Panc1 (cell line): ENCODE measurements at regions of chr3 and their contacts with region 1.

Region 1: DNA sequence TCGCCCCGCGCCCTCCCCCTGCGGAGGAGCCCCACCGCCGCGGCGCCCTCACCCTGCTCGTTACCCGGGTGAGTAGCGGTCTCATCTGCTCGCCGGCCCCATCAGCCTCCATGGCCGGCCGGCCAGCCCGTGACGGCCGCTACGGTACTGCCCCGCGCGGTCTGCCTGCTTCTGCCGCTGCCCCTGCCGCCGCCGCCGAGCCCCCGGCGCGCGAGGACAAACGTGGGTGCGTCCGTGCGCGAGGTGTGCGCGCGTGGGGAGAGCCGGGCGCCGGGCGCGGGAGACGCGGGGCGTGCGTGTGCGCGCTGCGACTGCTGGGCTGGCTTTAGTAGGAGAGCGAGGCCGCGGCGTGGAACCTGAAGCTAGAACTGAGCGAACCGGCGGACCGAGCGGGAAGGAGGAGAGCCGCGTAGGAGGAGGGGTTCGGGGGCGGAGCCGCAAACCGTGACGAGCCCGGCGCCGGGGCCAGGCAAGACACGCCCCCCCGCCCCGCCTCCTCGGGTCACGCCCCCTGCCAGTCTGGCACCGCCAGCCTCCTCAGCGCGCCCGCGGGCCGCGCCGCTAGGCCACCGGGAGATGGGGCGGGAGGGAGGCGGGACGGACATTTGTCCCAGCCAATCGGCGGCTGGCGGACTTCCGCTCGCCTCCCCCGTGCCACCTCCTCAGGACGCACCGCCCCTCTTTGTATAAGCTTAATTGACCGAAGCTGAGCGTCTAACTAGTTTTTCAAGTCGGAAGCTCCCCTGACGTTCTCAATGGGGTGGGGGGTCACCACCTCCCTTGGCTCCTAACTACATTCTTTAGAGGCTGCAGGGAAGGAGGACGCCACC is at the start of gene SLC4A7:
- DNase-seq: peak; percentile 57
- ATAC-seq: peak; percentile 92
- H3K4me3 ChIP-seq: peak within 1 kb of the TSS; percentile 78 to 86
- H3K27ac ChIP-seq: peak within 1 kb of the TSS; percentile 95
- H3K4me1 ChIP-seq: peaks cover 14% of the 10 kb centered on the region
- H3K27me3 ChIP-seq: no peaks in the 10 kb centered on the region
- CTCF ChIP-seq: no peak
- total RNA-seq, gene SLC4A7: 99.4 TPM

Region 2: GRCh38 chr3:27521179-27521871 is 37.1 kb after region 1 on chr3:
- CTCF ChIA-PET with region 1: interaction called, 7 read pairs
- POLR2A ChIA-PET with region 1: no interaction called
- in situ Hi-C with region 1: no loop called
- intact Hi-C with region 1: loop called (anchors 5 kb)
- DNase-seq: peak; percentile 86
- ATAC-seq: peak; percentile 69
- H3K4me3 ChIP-seq: no peak overlapping the region
- H3K27ac ChIP-seq: peak overlapping the region; percentile 99
- H3K4me1 ChIP-seq: peaks cover 36% of the 10 kb centered on the region
- H3K27me3 ChIP-seq: no peaks in the 10 kb centered on the region
- CTCF ChIP-seq: no peak

Region 3: GRCh38 chr3:27553886-27554540 is 69.8 kb after region 1 on chr3:
- CTCF ChIA-PET with region 1: no interaction called
- POLR2A ChIA-PET with region 1: no interaction called
- in situ Hi-C with region 1: no loop called
- intact Hi-C with region 1: no loop called
- DNase-seq: no peak
- ATAC-seq: no peak
- H3K4me3 ChIP-seq: no peak overlapping the region
- H3K27ac ChIP-seq: peak overlapping the region; percentile 57; the same call in 1 of the 2 replicates
- H3K4me1 ChIP-seq: no peaks in the 10 kb centered on the region
- H3K27me3 ChIP-seq: no peaks in the 10 kb centered on the region
- CTCF ChIP-seq: no peak

Region 4: DNA sequence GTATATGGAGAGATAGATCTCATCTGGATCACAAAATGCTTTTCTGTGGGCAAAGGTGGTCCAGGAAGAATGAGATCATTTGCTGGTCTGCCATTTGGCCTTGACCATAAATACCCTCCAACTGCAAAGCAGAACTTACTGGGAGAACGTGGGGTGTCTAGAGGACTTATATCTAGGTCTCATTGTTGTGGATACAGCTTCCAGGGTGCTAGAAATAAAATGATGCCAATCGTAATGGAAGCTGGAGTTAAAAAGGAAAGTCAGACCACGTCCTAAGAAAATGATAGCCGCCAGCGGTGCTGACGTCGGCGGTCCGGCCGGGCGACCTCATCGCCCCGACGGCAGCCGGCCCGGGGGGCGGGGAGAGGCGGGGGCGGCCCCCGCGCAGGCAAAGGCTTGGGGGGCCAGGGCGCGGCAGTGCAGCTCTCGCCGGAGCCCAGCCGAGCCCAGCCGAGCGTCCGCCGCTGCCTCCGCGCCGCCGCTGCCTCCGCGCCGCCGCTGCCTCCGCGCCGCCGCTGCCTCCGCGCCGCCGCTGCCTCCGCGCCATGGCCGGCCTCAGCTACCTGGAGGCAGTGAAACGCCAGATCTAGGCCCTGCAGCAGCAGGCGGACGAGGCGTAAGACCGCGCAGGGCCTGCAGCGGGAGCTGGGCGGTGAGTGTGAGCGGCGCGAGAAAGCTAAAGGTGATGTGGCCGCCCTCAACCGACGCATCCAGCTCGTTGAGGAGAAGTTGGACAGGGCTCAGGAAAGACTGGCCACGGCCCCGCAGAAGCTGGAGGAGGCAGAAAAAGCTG is 148.4 kb after region 1 on chr3:
- CTCF ChIA-PET with region 1: no interaction called
- POLR2A ChIA-PET with region 1: interaction called, 3 read pairs
- in situ Hi-C with region 1: no loop called
- intact Hi-C with region 1: loop called (anchors 5 kb)
- DNase-seq: no peak
- ATAC-seq: peak; percentile 82
- H3K4me3 ChIP-seq: peak overlapping the region; percentile 42 to 64
- H3K27ac ChIP-seq: peak overlapping the region; percentile 94
- H3K4me1 ChIP-seq: peaks cover 34% of the 10 kb centered on the region
- H3K27me3 ChIP-seq: no peaks in the 10 kb centered on the region
- CTCF ChIP-seq: no peak

Region 5: GRCh38 chr3:27681245-27681748 is 197.1 kb after region 1 on chr3:
- CTCF ChIA-PET with region 1: no interaction called
- POLR2A ChIA-PET with region 1: no interaction called
- in situ Hi-C with region 1: no loop called
- intact Hi-C with region 1: loop called (anchors 5 kb)
- DNase-seq: peak; percentile 66
- ATAC-seq: peak; percentile 70
- H3K4me3 ChIP-seq: peak overlapping the region in 1 of 2 experiments; percentile 31; a peak in 1 of 4 replicates
- H3K27ac ChIP-seq: peak overlapping the region; percentile 94
- H3K4me1 ChIP-seq: peaks cover 19% of the 10 kb centered on the region
- H3K27me3 ChIP-seq: no peaks in the 10 kb centered on the region
- CTCF ChIP-seq: peak; percentile 68